ENCODE measurements at regions of chr13 and their contacts with region 1.

Region 1: DNA sequence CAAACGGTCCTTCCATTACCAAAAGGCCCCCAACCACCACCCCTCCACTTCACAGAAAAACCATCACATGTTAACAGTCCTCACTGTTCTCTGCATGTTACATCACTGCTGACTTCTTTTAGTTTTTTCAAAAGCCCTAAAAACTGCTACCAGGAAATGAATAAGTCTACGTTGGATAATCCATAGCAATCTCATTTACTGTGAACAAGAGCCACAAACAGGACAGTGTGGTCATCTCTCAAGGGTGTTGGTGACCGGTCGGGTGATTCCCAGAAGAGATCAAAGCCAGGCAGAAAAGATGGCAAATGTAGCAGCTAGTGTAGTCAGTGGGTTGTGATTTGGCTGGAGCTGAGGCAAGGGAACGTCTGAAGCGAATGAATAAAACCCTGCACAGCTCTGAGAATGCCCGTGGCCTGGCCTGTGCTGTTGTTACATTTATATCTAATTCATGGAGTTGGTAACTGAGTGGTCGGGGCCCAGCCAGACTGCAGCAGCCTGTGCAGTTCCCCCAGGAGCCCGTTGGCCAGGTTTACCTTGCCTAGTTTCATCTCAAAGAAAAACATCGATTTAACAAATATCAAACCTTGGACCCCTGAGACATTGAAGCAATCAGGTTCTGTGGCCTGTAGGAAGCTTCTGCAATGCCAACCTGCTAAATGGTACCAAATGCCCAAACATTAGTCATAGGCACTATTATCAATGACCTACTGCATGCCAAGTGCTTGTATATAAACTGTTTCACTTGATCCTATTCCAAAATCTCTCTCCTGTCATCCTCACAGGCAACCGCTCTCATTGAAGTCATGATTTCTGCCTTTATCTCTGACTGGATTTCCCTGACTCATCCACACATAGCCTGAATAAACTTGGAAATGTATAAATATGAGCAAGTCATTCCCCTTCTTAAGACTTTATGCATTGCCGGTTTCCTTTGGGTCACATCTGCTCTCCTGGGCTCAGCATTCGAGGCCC is 153.8 kb upstream of the SERP2 start:
- DNase-seq: no peak

Region 2: GRCh38 chr13:44274452-44275205 is 54.8 kb after region 1 on chr13:
- intact Hi-C with region 1: loop called in 1 of 2 experiments (anchors 5 kb)
- DNase-seq: no peak

Region 3: DNA sequence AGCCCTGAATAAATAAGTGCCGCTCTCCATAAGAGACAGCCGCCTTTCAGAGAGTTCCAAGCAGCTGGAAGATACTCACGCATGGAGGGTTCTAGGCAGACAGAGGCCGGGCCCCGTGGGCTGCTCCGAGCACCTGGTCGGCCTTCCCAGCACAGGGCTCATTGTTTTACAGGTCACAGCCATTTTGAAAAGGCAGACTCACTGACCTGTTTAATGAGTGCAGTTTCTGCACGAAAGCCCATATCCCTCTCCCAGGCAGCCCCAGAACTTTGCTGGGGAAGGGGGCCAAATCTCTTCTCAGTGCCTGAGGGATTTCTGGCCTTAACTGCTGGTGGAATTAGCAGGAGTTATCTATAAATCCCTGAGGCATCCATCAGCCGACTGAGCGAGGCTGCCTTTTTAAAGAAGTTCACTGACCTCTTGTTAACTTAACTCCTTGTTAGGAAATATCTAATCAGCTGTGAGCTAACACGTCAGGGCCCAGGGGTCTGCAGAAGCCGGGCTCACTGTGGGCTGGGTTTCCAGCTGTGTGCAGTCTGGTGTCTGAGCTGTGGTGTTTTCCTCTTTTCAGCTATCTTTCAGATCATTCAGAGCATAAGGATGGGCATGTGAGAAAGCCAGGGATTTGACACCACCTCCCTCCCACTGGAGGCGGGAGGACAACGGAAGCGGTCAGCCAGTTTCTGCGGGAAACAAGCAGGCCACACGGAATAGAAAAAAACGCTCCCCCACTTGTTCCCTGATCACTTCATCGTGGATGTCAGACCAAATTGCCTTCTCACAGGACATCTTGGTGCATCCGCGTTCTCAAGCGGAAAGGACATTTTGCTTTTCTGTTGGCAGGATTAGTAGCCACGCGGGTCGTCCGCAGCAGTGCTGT is 177.1 kb after region 1 on chr13:
- intact Hi-C with region 1: no loop called
- DNase-seq: no peak

Region 4: GRCh38 chr13:45320876-45321629 is 1101.2 kb after region 1 on chr13:
- intact Hi-C with region 1: no loop called
- DNase-seq: no peak